CD14-positive monocyte (primary cell): ENCODE measurements at regions of chr6 and their contacts with region 1.

Region 1: DNA sequence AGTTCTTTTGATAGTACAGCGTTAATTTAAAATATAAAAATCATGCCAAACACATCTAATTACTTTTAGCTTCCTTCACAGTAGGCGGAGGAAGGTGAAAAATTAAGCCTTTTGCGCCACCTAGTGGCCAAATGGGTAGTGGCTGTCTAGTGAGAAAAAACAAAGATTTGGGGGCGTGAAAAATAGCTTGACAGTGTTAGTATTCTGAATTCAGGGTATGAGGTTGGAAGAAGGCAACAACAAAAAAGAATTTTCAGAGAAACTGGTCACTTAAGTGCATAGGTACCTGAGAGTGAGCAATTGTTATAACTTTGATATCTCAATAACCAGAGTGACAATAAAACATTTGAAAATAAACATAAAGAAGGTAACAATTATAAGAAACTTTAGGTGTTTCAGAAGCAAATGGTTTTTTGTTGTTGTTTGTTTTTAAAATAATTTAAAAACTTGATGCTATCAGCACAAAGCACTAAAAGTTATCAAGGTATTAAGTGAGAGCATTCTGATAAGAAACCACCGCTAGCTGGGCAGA is 14.3 kb downstream of the PSMB9 start:
- DNase-seq: peak; percentile 76 to 78 (median 77)
- H3K4me3 ChIP-seq: no peak overlapping the region
- H3K4me3 Mint-ChIP-seq: no peak overlapping the region
- H3K27ac ChIP-seq: no peak overlapping the region
- H3K27ac Mint-ChIP-seq: no peak overlapping the region
- H3K4me1 ChIP-seq: peaks cover 14 to 16% of the 10 kb centered on the region in 2 donors
- H3K4me1 Mint-ChIP-seq: peaks cover 13% of the 10 kb centered on the region
- H3K27me3 ChIP-seq: peaks cover 2 to 4% of the 10 kb centered on the region in 2 donors
- H3K27me3 Mint-ChIP-seq: peaks cover 10 to 16% (median 10%) of the 10 kb centered on the region in 3 donors
- CTCF ChIP-seq: peak; percentile 87

Region 2: DNA sequence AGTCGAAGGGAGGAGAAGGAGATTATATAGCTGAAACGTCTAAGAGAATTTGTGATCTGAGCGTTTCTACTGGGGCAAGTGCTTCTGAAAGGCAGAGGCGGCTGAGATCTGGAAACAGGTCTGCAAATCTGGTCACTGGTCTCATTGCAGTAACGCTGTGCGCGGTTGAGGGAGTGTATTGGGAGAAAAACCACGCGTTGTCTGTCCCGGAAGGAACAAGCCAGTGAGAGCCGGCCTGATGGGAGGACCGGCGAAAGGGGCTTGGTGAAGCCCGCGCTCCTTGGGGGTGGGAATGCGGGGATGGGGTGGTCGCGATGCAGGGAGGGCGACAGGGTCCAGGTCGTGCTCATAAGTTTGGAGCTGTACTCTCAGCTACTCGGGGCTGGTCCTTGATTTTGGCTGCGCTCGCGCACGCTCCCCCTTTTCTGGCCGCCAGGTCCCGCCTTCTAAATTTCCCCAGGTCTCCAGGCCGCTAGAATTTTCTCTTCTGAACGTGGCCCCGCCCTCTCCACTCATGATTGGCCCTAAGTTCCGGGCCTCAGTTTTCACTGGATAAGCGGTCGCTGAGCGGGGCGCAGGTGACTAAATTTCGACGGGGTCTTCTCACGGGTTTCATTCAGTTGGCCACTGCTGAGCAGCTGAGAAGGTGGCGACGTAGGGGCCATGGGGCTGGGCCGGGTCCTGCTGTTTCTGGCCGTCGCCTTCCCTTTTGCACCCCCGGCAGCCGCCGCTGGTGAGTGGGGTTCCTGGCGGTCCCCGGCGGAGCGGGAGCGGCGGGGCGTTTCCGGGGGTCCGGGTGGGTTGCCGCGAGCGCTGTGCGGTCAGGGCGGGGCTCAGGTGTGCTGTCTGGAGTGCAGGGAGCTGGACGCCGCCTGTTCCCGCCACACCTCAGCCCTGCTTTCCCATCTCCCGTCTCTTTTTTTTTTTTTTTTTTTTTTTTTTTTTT is 1370.5 kb before region 1 on chr6 and contains the start of gene MICB:
- intact Hi-C with region 1: no loop called
- DNase-seq: peak; percentile 51 to 68 (median 61)
- H3K4me3 ChIP-seq: peak within 1 kb of the TSS; percentile 51 to 98 (median 67)
- H3K4me3 Mint-ChIP-seq: peak within 1 kb of the TSS; percentile 85 to 96
- H3K27ac ChIP-seq: peak within 1 kb of the TSS; percentile 19 to 71
- H3K27ac Mint-ChIP-seq: peak within 1 kb of the TSS; percentile 78 to 95 (median 87)
- H3K4me1 ChIP-seq: peaks cover 47 to 62% of the 10 kb centered on the region in 2 donors
- H3K4me1 Mint-ChIP-seq: peaks cover 70% of the 10 kb centered on the region
- H3K27me3 ChIP-seq: no peaks in the 10 kb centered on the region
- H3K27me3 Mint-ChIP-seq: peaks cover 0 to 2% (median 0%) of the 10 kb centered on the region in 3 donors
- CTCF ChIP-seq: no peak
- polyA plus RNA-seq, gene MICB: 8.1 to 34.8 (median 11.4) TPM

Region 3: GRCh38 chr6:32195652-32195901 is 672.7 kb before region 1 on chr6:
- intact Hi-C with region 1: no loop called
- DNase-seq: peak; percentile 100
- H3K4me3 ChIP-seq: peak overlapping the region in 2 of 3 experiments; percentile 46 to 98
- H3K4me3 Mint-ChIP-seq: peak overlapping the region in 1 of 2 donors; percentile 84
- H3K27ac ChIP-seq: peak overlapping the region; percentile 98 to 99
- H3K27ac Mint-ChIP-seq: peak overlapping the region; percentile 98 to 100 (median 100)
- H3K4me1 ChIP-seq: peaks cover 53 to 62% of the 10 kb centered on the region in 2 donors
- H3K4me1 Mint-ChIP-seq: peaks cover 56% of the 10 kb centered on the region
- H3K27me3 ChIP-seq: no peaks in the 10 kb centered on the region
- H3K27me3 Mint-ChIP-seq: peaks cover 0 to 10% (median 2%) of the 10 kb centered on the region in 3 donors
- CTCF ChIP-seq: no peak

Region 4: GRCh38 chr6:32402812-32403211 is 465.5 kb before region 1 on chr6:
- intact Hi-C with region 1: loop called in 1 of 2 experiments (anchors 10 kb)
- DNase-seq: no peak
- H3K4me3 ChIP-seq: no peak overlapping the region
- H3K4me3 Mint-ChIP-seq: no peak overlapping the region
- H3K27ac ChIP-seq: no peak overlapping the region
- H3K27ac Mint-ChIP-seq: peak overlapping the region in 1 of 7 donors; percentile 23
- H3K4me1 ChIP-seq: no peaks in the 10 kb centered on the region
- H3K4me1 Mint-ChIP-seq: peaks cover 1% of the 10 kb centered on the region
- H3K27me3 ChIP-seq: peaks cover 0 to 7% of the 10 kb centered on the region in 2 donors
- H3K27me3 Mint-ChIP-seq: peaks cover 6 to 20% (median 13%) of the 10 kb centered on the region in 3 donors
- CTCF ChIP-seq: no peak

Region 5: GRCh38 chr6:32741031-32741960 is 127.0 kb before region 1 on chr6 and contains the start of gene HLA-DQA2:
- intact Hi-C with region 1: loop called in 1 of 2 experiments (anchors 5 kb)
- DNase-seq: peak in 2 of 3 donors; percentile 43 to 45
- H3K4me3 ChIP-seq: no peak within 1 kb of the TSS
- H3K4me3 Mint-ChIP-seq: peak within 1 kb of the TSS in 1 of 2 donors; percentile 56
- H3K27ac ChIP-seq: no peak within 1 kb of the TSS
- H3K27ac Mint-ChIP-seq: peak within 1 kb of the TSS in 2 of 7 donors; percentile 61 to 79
- H3K4me1 ChIP-seq: no peaks in the 10 kb centered on the region
- H3K4me1 Mint-ChIP-seq: peaks cover 3% of the 10 kb centered on the region
- H3K27me3 ChIP-seq: peaks cover 0 to 6% of the 10 kb centered on the region in 2 donors
- H3K27me3 Mint-ChIP-seq: peaks cover 3 to 19% (median 7%) of the 10 kb centered on the region in 3 donors
- CTCF ChIP-seq: no peak
- polyA plus RNA-seq, gene HLA-DQA2: 0.24 to 53.5 (median 15.5) TPM

Region 6: DNA sequence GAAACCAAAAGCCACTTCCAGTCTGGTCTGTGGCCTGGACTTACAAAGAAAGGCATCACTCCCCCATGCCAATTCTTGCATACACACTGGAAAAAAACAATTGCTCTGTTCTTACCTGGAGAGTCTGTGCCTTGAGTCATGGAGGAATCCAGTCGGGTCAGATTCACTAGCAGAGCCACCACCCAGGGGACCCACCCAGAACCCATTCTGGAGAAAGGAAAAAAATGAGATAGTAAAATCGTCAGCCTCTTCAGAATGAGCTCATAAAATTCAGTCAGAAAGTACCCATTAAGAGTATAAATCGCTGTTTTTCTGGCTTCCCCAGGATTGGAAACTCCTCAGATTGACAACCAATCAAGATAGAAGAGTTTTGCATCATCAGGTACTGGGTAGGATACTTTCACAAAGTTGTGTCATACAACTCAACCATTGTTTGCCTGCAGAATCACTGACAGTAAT is 51.5 kb before region 1 on chr6 and contains the start of gene HLA-DOB:
- intact Hi-C with region 1: no loop called
- DNase-seq: peak; percentile 29 to 67 (median 43)
- H3K4me3 ChIP-seq: no peak within 1 kb of the TSS
- H3K4me3 Mint-ChIP-seq: peak within 1 kb of the TSS; percentile 48 to 56
- H3K27ac ChIP-seq: no peak within 1 kb of the TSS
- H3K27ac Mint-ChIP-seq: peak within 1 kb of the TSS in 4 of 7 donors; percentile 46 to 76 (median 66)
- H3K4me1 ChIP-seq: peaks cover 17 to 22% of the 10 kb centered on the region in 2 donors
- H3K4me1 Mint-ChIP-seq: peaks cover 27% of the 10 kb centered on the region
- H3K27me3 ChIP-seq: no peaks in the 10 kb centered on the region
- H3K27me3 Mint-ChIP-seq: peaks cover 0 to 1% (median 0%) of the 10 kb centered on the region in 3 donors
- CTCF ChIP-seq: no peak
- polyA plus RNA-seq, gene HLA-DOB: 0.25 to 6.2 (median 0.64) TPM

Region 7: GRCh38 chr6:32838114-32838958 is 30.0 kb before region 1 on chr6 and contains the start of gene TAP2:
- intact Hi-C with region 1: loop called (anchors 1 to 5 kb)
- DNase-seq: peak; percentile 94 to 95 (median 94)
- H3K4me3 ChIP-seq: peak within 1 kb of the TSS; percentile 71 to 91 (median 78)
- H3K4me3 Mint-ChIP-seq: peak within 1 kb of the TSS; percentile 87 to 89
- H3K27ac ChIP-seq: peak within 1 kb of the TSS; percentile 82 to 86
- H3K27ac Mint-ChIP-seq: peak within 1 kb of the TSS; percentile 84 to 94 (median 88)
- H3K4me1 ChIP-seq: peaks cover 32 to 47% of the 10 kb centered on the region in 2 donors
- H3K4me1 Mint-ChIP-seq: peaks cover 58% of the 10 kb centered on the region
- H3K27me3 ChIP-seq: no peaks in the 10 kb centered on the region
- H3K27me3 Mint-ChIP-seq: no peaks in the 10 kb centered on the region
- CTCF ChIP-seq: peak; percentile 93
- polyA plus RNA-seq, gene TAP2: 12.6 to 48.7 (median 25.9) TPM

Region 8: DNA sequence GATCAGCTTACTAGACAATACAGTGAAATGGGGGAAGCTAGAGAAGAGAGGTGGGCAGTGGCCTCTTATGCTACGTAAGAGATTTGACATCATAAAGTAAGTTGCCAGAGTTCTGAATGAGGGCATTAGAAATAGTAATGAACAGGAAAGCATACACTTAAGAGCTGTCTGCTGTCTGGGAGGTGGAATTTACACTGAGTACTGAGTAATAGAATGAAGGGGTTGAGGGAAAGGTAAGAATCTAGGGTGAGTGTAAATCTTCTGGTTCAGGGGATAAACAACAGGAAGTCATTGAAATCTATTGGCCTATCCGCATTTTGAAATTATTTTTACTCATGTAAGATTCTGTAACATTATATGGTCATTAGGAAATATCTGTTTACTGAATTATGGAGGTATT is 36.8 kb after region 1 on chr6:
- intact Hi-C with region 1: no loop called
- DNase-seq: no peak
- H3K4me3 ChIP-seq: no peak overlapping the region
- H3K4me3 Mint-ChIP-seq: no peak overlapping the region
- H3K27ac ChIP-seq: no peak overlapping the region
- H3K27ac Mint-ChIP-seq: no peak overlapping the region
- H3K4me1 ChIP-seq: peaks cover 6 to 16% of the 10 kb centered on the region in 2 donors
- H3K4me1 Mint-ChIP-seq: peaks cover 13% of the 10 kb centered on the region
- H3K27me3 ChIP-seq: no peaks in the 10 kb centered on the region
- H3K27me3 Mint-ChIP-seq: peaks cover 0 to 3% (median 2%) of the 10 kb centered on the region in 3 donors
- CTCF ChIP-seq: no peak